ENCODE measurements at regions of chr1 and their contacts with region 1.

Region 1: DNA sequence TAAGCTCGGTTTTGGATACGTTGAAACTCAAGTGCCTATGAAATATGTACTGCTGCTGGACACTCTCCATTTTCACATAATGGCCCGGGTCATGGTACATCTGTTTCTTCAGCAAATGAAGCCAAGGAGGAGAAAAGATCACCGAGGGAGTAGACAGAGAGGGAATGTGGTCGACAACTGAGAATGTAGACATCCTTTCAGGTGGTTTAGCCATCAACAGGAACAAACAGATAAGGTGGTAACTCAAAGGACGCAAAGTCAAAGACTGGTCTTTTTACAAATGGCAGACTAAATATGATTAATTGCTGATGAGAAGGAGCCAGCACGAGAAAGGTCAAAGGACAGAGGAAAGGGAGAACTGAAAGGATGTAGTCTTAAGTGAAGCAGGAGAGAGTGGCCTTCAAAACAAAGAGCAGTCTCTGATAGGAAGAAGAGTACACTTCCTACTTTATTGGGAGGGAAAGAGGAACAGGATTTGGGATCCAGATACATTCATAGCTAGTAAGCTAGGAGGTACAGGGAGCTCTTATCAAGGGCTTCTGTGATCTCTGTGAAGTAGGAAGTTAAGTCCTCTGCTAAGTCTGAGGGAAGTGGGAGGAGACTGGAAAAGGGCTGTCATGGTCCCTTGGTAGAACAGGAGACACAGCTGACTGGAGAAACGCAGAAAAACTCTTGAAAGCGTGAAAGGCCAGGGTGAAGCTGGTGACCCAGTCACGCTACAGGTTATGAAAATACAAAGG is 28.3 kb downstream of the NUP133 start:
- DNase-seq: no peak

Region 2: GRCh38 chr1:229258031-229258756 is 221.6 kb before region 1 on chr1:
- intact Hi-C with region 1: loop called (anchors 2 to 5 kb)
- DNase-seq: no peak

Region 3: GRCh38 chr1:229553621-229554130 is 73.8 kb after region 1 on chr1:
- intact Hi-C with region 1: no loop called
- DNase-seq: no peak

Measured in posterior vena cava (tissue), 2 donors.